K562 (cell line): ENCODE measurements at regions of chr3 and their contacts with region 1.

Region 1: GRCh38 chr3:9902372-9903237 is at the start of gene IL17RE:
- DNase-seq: peak; percentile 63 to 67 (median 64)
- ATAC-seq: peak; percentile 68
- H3K4me3 ChIP-seq: no peak within 1 kb of the TSS
- H3K27ac ChIP-seq: peak within 1 kb of the TSS; percentile 39; the same call in 1 of the 3 replicates
- H3K4me1 ChIP-seq: peaks cover 36 to 39% of the 10 kb centered on the region in 2 experiments
- H3K27me3 ChIP-seq: no peaks in the 10 kb centered on the region
- CTCF ChIP-seq: no peak
- EP300 ChIP-seq: no peak
- POLR2A ChIP-seq: no peak
- RAD21 ChIP-seq: no peak
- polyA plus RNA-seq, gene IL17RE: not detected

Region 2: GRCh38 chr3:9890249-9891071 is 12.1 kb before region 1 on chr3 and contains the start of gene JAGN1:
- CTCF ChIA-PET with region 1: no interaction called
- POLR2A ChIA-PET with region 1: interaction called, 33 read pairs
- in situ Hi-C with region 1: no loop called
- intact Hi-C with region 1: no loop called
- DNase-seq: peak; percentile 96 to 97 (median 96)
- ATAC-seq: peak; percentile 87
- H3K4me3 ChIP-seq: peak within 1 kb of the TSS; percentile 76
- H3K27ac ChIP-seq: peak within 1 kb of the TSS; percentile 98
- H3K4me1 ChIP-seq: peaks cover 16 to 17% of the 10 kb centered on the region in 2 experiments
- H3K27me3 ChIP-seq: no peaks in the 10 kb centered on the region
- CTCF ChIP-seq: peak; percentile 6 to 28 (median 19); a peak in 1 of 6 replicates
- EP300 ChIP-seq: no peak; the same call in 1 of the 2 replicates
- POLR2A ChIP-seq: peak; percentile 98
- RAD21 ChIP-seq: no peak
- polyA plus RNA-seq, gene JAGN1: 31.6 to 33.3 TPM

Region 3: DNA sequence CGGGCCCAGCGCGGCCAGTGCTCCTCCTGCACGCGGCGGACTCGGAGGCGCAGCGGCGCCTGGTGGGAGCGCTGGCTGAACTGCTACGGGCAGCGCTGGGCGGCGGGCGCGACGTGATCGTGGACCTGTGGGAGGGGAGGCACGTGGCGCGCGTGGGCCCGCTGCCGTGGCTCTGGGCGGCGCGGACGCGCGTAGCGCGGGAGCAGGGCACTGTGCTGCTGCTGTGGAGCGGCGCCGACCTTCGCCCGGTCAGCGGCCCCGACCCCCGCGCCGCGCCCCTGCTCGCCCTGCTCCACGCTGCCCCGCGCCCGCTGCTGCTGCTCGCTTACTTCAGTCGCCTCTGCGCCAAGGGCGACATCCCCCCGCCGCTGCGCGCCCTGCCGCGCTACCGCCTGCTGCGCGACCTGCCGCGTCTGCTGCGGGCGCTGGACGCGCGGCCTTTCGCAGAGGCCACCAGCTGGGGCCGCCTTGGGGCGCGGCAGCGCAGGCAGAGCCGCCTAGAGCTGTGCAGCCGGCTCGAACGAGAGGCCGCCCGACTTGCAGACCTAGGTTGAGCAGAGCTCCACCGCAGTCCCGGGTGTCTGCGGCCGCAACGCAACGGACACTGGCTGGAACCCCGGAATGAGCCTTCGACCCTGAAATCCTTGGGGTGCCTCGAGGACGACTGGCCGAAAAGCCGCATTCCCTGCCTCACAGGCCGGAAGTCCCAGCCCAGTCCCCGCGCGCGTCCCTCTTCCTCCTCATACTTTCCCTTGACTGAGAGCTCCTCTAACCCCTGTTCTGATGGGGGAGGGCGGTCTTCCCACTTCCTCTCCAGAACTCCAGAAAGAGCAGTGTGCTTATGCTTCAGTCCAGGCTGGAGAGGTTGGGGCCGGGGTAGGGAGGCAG is 12.9 kb after region 1 on chr3:
- CTCF ChIA-PET with region 1: no interaction called
- POLR2A ChIA-PET with region 1: interaction called, 28 read pairs
- in situ Hi-C with region 1: no loop called
- intact Hi-C with region 1: no loop called
- DNase-seq: no peak
- ATAC-seq: no peak
- H3K4me3 ChIP-seq: no peak overlapping the region
- H3K27ac ChIP-seq: peak overlapping the region; percentile 36; the same call in 2 of the 3 replicates
- H3K4me1 ChIP-seq: peaks cover 30 to 49% of the 10 kb centered on the region in 2 experiments
- H3K27me3 ChIP-seq: no peaks in the 10 kb centered on the region
- CTCF ChIP-seq: no peak
- EP300 ChIP-seq: no peak
- POLR2A ChIP-seq: no peak
- RAD21 ChIP-seq: no peak

Region 4: GRCh38 chr3:10026084-10026890 is 123.7 kb after region 1 on chr3 and contains the start of gene FANCD2:
- CTCF ChIA-PET with region 1: no interaction called
- POLR2A ChIA-PET with region 1: no interaction called
- in situ Hi-C with region 1: no loop called
- intact Hi-C with region 1: no loop called
- DNase-seq: peak; percentile 86 to 96 (median 88)
- ATAC-seq: peak; percentile 92
- H3K4me3 ChIP-seq: peak within 1 kb of the TSS; percentile 81
- H3K27ac ChIP-seq: peak within 1 kb of the TSS; percentile 86
- H3K4me1 ChIP-seq: peaks cover 10 to 13% of the 10 kb centered on the region in 2 experiments; a peak in 4 of 5 replicates
- H3K27me3 ChIP-seq: no peaks in the 10 kb centered on the region; a peak in 1 of 5 replicates
- CTCF ChIP-seq: no peak
- EP300 ChIP-seq: peak; percentile 58
- POLR2A ChIP-seq: peak; percentile 88
- RAD21 ChIP-seq: peak in 1 of 2 experiments; percentile 23; a peak in 2 of 4 replicates
- polyA plus RNA-seq, gene FANCD2: 86.6 to 105 TPM